Ascending aorta (tissue), 2 donors: ENCODE measurements at regions of chr19 and their contacts with region 1.

Region 1: GRCh38 chr19:4457654-4458395 is at the start of gene UBXN6:
- DNase-seq: peak; percentile 88 to 99
- H3K4me3 ChIP-seq: peak within 1 kb of the TSS; percentile 86 to 99
- H3K27ac ChIP-seq: peak within 1 kb of the TSS; percentile 87 to 91
- H3K4me1 ChIP-seq: peaks cover 6 to 20% of the 10 kb centered on the region in 2 donors
- H3K27me3 ChIP-seq: no peaks in the 10 kb centered on the region
- CTCF ChIP-seq: no peak
- total RNA-seq, gene UBXN6: 560 TPM

Region 2: DNA sequence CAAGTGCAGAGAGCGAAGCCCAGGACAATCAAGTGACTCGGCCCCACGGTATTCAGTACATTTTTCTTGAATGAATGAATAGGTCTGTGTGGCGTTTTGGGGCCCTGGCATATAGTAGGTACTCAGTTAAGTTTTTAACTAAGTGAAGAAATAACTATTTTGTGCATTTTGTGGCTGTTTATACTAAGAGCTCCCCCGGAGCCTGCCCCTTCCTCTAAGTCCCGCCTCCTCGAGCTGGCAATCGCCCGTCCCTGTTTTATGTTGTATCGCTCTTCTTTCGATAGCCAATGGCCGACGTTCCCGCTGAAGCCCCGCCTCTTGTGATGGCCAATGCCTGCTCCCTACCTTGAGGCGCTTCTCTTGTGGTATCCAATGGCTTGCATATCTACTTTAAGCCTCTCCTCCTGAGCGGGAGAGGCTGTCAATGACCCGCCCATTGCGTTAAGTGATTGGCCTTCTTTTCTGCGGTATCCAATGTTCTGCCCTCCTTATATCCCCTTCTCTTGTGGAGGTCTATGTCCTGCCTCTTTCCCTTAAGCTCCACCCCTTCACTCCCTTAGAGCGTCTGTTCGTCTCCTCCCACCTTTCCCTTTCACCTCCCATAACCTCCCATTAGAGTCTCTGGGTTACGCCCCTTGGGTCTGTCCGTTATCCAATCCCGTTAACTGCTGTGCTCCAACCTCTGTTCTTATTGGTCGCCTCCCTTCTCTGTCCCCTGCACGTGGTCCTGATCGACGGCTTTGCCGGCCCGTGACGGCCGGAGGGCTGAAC is 13.8 kb after region 1 on chr19:
- intact Hi-C with region 1: loop called (anchors 1 kb)
- DNase-seq: peak; percentile 99 to 100
- H3K4me3 ChIP-seq: peak overlapping the region; percentile 94 to 100
- H3K27ac ChIP-seq: peak overlapping the region; percentile 58 to 81
- H3K4me1 ChIP-seq: peaks cover 7 to 28% of the 10 kb centered on the region in 2 donors
- H3K27me3 ChIP-seq: no peaks in the 10 kb centered on the region
- CTCF ChIP-seq: no peak